GM12878 (cell line): ENCODE measurements at regions of chr17 and their contacts with region 1.

Region 1: GRCh38 chr17:72318131-72318530 is 197.3 kb downstream of the SOX9 start:
- DNase-seq: no peak
- ATAC-seq: peak; percentile 13
- H3K4me3 ChIP-seq: no peak overlapping the region
- H3K27ac ChIP-seq: no peak overlapping the region
- H3K4me1 ChIP-seq: peaks cover 16% of the 10 kb centered on the region
- H3K27me3 ChIP-seq: no peaks in the 10 kb centered on the region
- CTCF ChIP-seq: no peak
- EP300 ChIP-seq: 0 out of 4 replicates have a peak, but pooled peaks of 1 of the 2 experiments have one; percentile 4
- POLR2A ChIP-seq: no peak
- RAD21 ChIP-seq: no peak

Region 2: GRCh38 chr17:72004611-72005331 is 313.4 kb before region 1 on chr17:
- CTCF ChIA-PET with region 1: no interaction called
- POLR2A ChIA-PET with region 1: interaction called, 4 read pairs
- RAD21 ChIA-PET with region 1: no interaction called
- SMC1A ChIA-PET with region 1: interaction called, 4 read pairs
- in situ Hi-C with region 1: no loop called
- intact Hi-C with region 1: loop called (anchors 5 kb)
- DNase-seq: peak; percentile 79
- ATAC-seq: peak; percentile 77
- H3K4me3 ChIP-seq: peak overlapping the region; percentile 35
- H3K27ac ChIP-seq: peak overlapping the region; percentile 87
- H3K4me1 ChIP-seq: peaks cover 7% of the 10 kb centered on the region; the same call in 1 of the 2 replicates
- H3K27me3 ChIP-seq: no peaks in the 10 kb centered on the region
- CTCF ChIP-seq: no peak
- EP300 ChIP-seq: peak in 1 of 2 experiments; percentile 11; a peak in 2 of 4 replicates
- POLR2A ChIP-seq: no peak
- RAD21 ChIP-seq: peak; percentile 10; the same call in 1 of the 2 replicates

Region 3: GRCh38 chr17:72151565-72152391 is 166.4 kb before region 1 on chr17:
- CTCF ChIA-PET with region 1: no interaction called
- POLR2A ChIA-PET with region 1: no interaction called
- RAD21 ChIA-PET with region 1: no interaction called
- SMC1A ChIA-PET with region 1: no interaction called
- in situ Hi-C with region 1: no loop called
- intact Hi-C with region 1: no loop called
- DNase-seq: no peak
- ATAC-seq: no peak
- H3K4me3 ChIP-seq: no peak overlapping the region
- H3K27ac ChIP-seq: no peak overlapping the region
- H3K4me1 ChIP-seq: no peaks in the 10 kb centered on the region
- H3K27me3 ChIP-seq: no peaks in the 10 kb centered on the region
- CTCF ChIP-seq: no peak
- EP300 ChIP-seq: no peak
- POLR2A ChIP-seq: no peak
- RAD21 ChIP-seq: no peak

Region 4: DNA sequence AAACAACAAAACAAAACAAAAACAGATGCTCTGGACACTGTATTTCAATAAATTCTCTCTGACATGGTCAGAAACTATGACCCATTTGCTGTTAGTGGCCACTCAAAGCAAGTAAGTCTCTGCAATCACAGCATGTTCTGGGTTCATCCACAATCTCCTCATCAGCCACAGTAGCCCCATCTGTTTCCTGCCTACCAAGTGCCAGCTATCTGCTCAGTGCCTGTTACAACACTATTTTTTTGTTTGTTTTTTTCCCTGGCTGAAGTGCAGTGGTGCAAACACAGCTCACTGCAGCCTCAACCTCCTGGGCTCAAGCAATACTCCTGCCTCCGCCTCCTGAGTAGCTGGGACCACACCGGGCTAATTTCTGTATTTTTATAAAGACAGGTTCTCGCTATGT is 59.4 kb before region 1 on chr17:
- CTCF ChIA-PET with region 1: no interaction called
- POLR2A ChIA-PET with region 1: no interaction called
- RAD21 ChIA-PET with region 1: no interaction called
- SMC1A ChIA-PET with region 1: no interaction called
- in situ Hi-C with region 1: no loop called
- intact Hi-C with region 1: no loop called
- DNase-seq: no peak
- ATAC-seq: no peak
- H3K4me3 ChIP-seq: no peak overlapping the region
- H3K27ac ChIP-seq: no peak overlapping the region
- H3K4me1 ChIP-seq: no peaks in the 10 kb centered on the region
- H3K27me3 ChIP-seq: no peaks in the 10 kb centered on the region
- CTCF ChIP-seq: no peak
- EP300 ChIP-seq: no peak
- POLR2A ChIP-seq: no peak
- RAD21 ChIP-seq: no peak

Region 5: DNA sequence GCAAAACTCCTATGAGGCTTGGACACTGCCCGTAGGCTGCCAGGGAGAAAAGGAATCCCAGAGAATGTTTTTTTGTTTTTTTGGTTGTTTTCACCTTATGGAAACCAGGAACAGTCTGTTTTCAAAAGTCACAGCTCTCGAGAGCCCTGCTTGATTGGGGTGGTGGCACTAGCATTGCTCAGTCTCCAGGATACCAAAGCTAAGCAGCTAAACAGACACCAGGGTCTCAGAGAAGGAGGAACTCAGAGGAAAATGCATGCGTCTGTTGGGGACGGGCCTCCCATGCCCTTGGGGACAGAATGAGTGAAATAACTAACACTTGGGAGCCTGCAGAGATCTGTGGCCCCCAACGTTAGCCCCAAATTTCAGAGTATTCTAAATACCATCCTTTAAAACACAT is 18.5 kb before region 1 on chr17:
- CTCF ChIA-PET with region 1: interaction called, 8 read pairs
- POLR2A ChIA-PET with region 1: interaction called, 4 read pairs
- RAD21 ChIA-PET with region 1: interaction called, 10 read pairs
- SMC1A ChIA-PET with region 1: interaction called, 9 read pairs
- in situ Hi-C with region 1: no loop called
- intact Hi-C with region 1: no loop called
- DNase-seq: no peak
- ATAC-seq: no peak
- H3K4me3 ChIP-seq: no peak overlapping the region
- H3K27ac ChIP-seq: no peak overlapping the region
- H3K4me1 ChIP-seq: peaks cover 11% of the 10 kb centered on the region
- H3K27me3 ChIP-seq: no peaks in the 10 kb centered on the region
- CTCF ChIP-seq: no peak
- EP300 ChIP-seq: no peak
- POLR2A ChIP-seq: no peak
- RAD21 ChIP-seq: no peak

Region 6: DNA sequence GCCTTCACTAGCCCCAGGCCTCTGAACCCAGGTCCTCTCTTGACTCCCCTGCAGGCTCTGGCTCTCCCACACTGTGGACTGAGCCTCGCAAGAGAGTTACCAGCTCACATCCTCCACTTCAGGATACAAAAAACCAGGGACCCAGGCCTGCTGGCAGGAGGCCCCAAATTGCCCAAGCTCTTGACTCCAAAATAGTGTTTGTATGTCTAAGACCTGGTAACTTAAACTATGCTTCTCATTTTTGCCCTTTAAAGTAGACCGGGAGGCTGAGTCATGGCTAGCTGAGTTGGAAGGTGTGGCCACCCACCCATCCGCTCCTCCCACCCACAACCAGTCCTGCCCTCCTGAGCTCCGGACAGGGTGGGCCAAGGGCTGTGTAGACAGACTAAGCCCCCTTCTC is 52.7 kb after region 1 on chr17:
- CTCF ChIA-PET with region 1: no interaction called
- POLR2A ChIA-PET with region 1: no interaction called
- RAD21 ChIA-PET with region 1: no interaction called
- SMC1A ChIA-PET with region 1: interaction called, 3 read pairs
- in situ Hi-C with region 1: loop called (anchors 5 kb)
- intact Hi-C with region 1: no loop called
- DNase-seq: no peak
- ATAC-seq: no peak
- H3K4me3 ChIP-seq: no peak overlapping the region
- H3K27ac ChIP-seq: no peak overlapping the region
- H3K4me1 ChIP-seq: no peaks in the 10 kb centered on the region
- H3K27me3 ChIP-seq: no peaks in the 10 kb centered on the region
- CTCF ChIP-seq: no peak
- EP300 ChIP-seq: no peak
- POLR2A ChIP-seq: no peak
- RAD21 ChIP-seq: no peak

Region 7: DNA sequence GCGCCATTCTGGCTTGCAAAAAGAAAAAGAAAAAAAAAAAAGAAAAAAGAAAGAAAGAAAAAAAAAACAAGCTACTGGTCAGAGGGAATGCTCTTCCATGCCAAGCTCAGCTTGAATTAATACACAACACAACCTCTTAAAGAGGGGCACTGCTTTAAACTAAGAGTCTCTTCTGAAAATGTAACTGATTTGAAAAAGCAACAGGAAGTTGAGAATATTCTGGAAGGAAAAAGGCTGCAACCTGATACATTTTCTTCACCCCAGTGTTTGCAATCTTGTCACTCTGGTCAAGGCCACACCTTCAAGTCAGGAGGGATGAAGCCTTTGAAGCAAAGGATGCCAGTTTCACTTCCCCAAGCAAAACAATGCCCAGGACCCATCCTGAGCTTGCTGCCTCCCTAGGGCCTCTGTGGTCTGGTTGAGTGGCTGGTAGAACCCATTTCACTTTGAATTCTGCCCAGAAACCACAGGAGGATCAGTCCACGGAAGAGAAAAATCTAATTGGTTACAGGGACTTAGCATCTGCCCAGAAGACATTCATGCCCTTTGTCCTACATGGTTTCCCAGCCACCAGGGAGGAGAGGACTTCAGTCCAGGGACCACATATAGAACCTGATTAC is 192.4 kb after region 1 on chr17:
- CTCF ChIA-PET with region 1: interaction called, 4 read pairs
- POLR2A ChIA-PET with region 1: interaction called, 3 read pairs
- RAD21 ChIA-PET with region 1: interaction called, 5 read pairs
- SMC1A ChIA-PET with region 1: interaction called, 3 read pairs
- in situ Hi-C with region 1: no loop called
- intact Hi-C with region 1: loop called (anchors 5 kb)
- DNase-seq: peak; percentile 92
- ATAC-seq: peak; percentile 80
- H3K4me3 ChIP-seq: no peak overlapping the region
- H3K27ac ChIP-seq: no peak overlapping the region
- H3K4me1 ChIP-seq: peaks cover 15% of the 10 kb centered on the region
- H3K27me3 ChIP-seq: no peaks in the 10 kb centered on the region
- CTCF ChIP-seq: no peak
- EP300 ChIP-seq: peak in 1 of 2 experiments; percentile 69; a peak in 1 of 4 replicates
- POLR2A ChIP-seq: no peak
- RAD21 ChIP-seq: no peak